OCI-LY7 (cell line): ENCODE measurements at regions of chr2 and their contacts with region 1.

Region 1: DNA sequence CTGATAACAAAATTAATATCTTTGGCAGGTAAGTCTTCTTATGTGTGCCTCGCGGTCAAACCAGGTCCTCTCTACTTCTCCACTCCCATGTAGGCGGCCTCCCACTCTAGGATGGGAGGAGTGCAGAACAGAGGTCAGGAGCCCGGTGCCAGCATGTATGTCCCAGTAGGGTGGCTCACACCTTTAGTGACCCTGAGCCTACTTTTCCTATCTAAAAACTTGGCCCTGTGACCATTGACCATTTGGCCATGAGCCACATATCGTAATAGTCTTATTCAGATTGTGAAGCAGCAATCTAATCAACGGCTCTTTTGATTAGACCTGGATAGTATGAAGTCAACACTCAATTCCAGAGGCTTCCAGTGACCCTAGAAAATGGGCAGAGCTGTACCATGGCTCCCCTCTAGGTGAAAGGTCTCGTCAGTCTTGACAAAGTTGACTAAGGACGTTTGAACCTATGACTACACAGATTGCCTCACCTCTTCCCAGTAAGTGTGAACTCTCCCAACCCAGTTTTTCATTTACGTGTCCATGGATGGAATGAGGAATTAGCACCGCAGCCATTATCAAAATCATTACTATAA is 17.1 kb upstream of the FABP1 start:
- DNase-seq: no peak
- H3K4me3 ChIP-seq: no peak overlapping the region
- H3K27ac ChIP-seq: no peak overlapping the region
- H3K4me1 ChIP-seq: no peaks in the 10 kb centered on the region
- CTCF ChIP-seq: no peak

Region 2: GRCh38 chr2:88099798-88100488 is 45.1 kb before region 1 on chr2:
- CTCF ChIA-PET with region 1: no interaction called
- POLR2A ChIA-PET with region 1: no interaction called
- intact Hi-C with region 1: loop called (anchors 5 kb)
- DNase-seq: no peak
- H3K4me3 ChIP-seq: no peak overlapping the region
- H3K27ac ChIP-seq: no peak overlapping the region
- H3K4me1 ChIP-seq: no peaks in the 10 kb centered on the region
- CTCF ChIP-seq: no peak